ENCODE measurements at regions of chr15 and their contacts with region 1.

Region 1: GRCh38 chr15:59372352-59373211 is at the start of gene MYO1E:
- DNase-seq: peak; percentile 86 to 92 (median 90)
- ATAC-seq: peak; percentile 98
- H3K4me3 ChIP-seq: peak within 1 kb of the TSS; percentile 81
- H3K27ac ChIP-seq: peak within 1 kb of the TSS; percentile 92
- H3K4me1 ChIP-seq: no peaks in the 10 kb centered on the region
- H3K27me3 ChIP-seq: no peaks in the 10 kb centered on the region
- total RNA-seq, gene MYO1E: 19.8 to 28.5 (median 24.0) TPM

Region 2: GRCh38 chr15:59002418-59002859 is 370.1 kb before region 1 on chr15:
- intact Hi-C with region 1: no loop called
- DNase-seq: no peak
- ATAC-seq: no peak
- H3K4me3 ChIP-seq: no peak overlapping the region
- H3K27ac ChIP-seq: no peak overlapping the region
- H3K4me1 ChIP-seq: no peaks in the 10 kb centered on the region
- H3K27me3 ChIP-seq: no peaks in the 10 kb centered on the region

Region 3: GRCh38 chr15:59247364-59247763 is 125.2 kb before region 1 on chr15:
- intact Hi-C with region 1: loop called in 2 of 4 experiments (anchors 10 kb)
- DNase-seq: peak in 2 of 3 donors; percentile 28 to 60
- ATAC-seq: peak; percentile 72 to 82
- H3K4me3 ChIP-seq: no peak overlapping the region
- H3K27ac ChIP-seq: no peak overlapping the region
- H3K4me1 ChIP-seq: peaks cover 2% of the 10 kb centered on the region
- H3K27me3 ChIP-seq: no peaks in the 10 kb centered on the region

Region 4: GRCh38 chr15:59283717-59284336 is 88.8 kb before region 1 on chr15:
- intact Hi-C with region 1: loop called in 1 of 4 experiments (anchors 10 kb)
- DNase-seq: no peak
- ATAC-seq: peak in 1 of 2 donors; percentile 64
- H3K4me3 ChIP-seq: no peak overlapping the region
- H3K27ac ChIP-seq: no peak overlapping the region
- H3K4me1 ChIP-seq: no peaks in the 10 kb centered on the region
- H3K27me3 ChIP-seq: no peaks in the 10 kb centered on the region